Left colon (tissue), 2 donors: ENCODE measurements at regions of chr7 and their contacts with region 1.

Region 1: GRCh38 chr7:94295850-94296249 is 98.8 kb upstream of the COL1A2 start:
- DNase-seq: no peak
- ATAC-seq: no peak

Region 2: DNA sequence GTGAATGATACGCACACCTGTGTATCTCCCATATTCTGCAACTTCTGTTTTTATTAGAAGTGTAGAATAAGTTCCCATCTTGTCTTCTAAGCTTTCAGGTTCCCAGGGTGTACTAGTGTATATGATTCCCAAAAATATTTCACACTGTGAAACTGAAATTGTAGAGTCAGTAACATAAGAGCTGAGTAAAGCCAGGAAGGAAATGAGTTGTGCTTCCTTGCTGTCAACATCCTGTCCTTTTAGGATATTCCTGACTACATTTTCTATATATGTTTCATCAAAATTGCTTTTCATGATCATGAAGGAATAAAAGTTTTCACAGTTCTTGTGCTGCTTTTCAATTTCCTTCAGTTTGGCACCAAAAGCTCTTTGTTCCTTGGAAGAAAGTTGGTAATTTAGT is 1162.8 kb before region 1 on chr7:
- intact Hi-C with region 1: no loop called
- DNase-seq: no peak
- ATAC-seq: no peak

Region 3: GRCh38 chr7:94190599-94191061 is 105.2 kb before region 1 on chr7:
- intact Hi-C with region 1: no loop called
- DNase-seq: no peak
- ATAC-seq: no peak

Region 4: DNA sequence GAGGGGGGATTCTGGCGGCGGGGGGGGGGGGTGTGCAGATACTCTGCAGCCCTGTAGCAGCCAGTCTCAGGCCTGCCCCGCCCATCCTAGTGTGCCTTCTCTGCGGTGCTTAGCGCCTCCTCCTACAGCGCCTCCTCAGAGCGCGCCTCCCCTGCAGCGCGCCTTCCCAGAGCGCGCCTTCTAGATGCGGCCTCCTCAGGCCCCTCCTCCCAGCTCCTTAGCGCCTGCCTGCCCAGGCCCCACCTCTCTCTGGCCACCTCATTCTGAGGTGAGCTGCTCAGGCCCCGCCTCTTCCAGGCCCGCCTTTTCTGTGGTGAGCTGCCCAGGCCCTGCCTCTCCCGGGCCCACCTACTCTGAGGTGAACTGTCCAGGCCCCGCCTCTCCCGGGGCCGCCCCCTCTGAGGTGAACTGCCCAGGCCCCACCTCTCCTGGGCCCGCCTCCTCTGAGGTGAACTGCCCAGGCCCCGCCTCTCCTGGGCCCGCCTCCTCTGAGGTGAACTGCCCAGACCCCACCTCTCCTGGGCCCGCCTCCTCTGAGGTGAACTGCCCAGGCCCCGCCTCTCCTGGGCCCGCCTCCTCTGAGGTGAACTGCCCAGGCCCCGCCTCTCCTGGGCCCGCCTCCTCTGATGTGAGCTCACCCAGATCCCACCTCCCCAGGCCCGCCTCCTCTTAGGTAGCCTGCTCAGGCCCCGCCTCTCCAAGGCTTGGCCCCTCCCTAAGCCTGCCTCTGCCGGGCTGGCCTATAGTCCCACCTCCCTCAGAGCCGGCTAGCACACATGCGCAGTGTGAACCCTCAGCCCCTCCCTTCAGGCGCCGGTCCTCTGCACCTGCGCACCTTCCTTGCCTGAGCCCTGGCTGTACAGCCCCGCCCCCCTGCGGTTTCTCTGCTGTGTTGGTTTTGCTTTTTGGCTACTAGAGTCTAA is 362.2 kb after region 1 on chr7:
- intact Hi-C with region 1: loop called in 1 of 2 experiments (anchors 10 kb)
- DNase-seq: peak; percentile 94 to 96
- ATAC-seq: peak; percentile 87